PC-9 (cell line): ENCODE measurements at regions of chr17 and their contacts with region 1.

Region 1: DNA sequence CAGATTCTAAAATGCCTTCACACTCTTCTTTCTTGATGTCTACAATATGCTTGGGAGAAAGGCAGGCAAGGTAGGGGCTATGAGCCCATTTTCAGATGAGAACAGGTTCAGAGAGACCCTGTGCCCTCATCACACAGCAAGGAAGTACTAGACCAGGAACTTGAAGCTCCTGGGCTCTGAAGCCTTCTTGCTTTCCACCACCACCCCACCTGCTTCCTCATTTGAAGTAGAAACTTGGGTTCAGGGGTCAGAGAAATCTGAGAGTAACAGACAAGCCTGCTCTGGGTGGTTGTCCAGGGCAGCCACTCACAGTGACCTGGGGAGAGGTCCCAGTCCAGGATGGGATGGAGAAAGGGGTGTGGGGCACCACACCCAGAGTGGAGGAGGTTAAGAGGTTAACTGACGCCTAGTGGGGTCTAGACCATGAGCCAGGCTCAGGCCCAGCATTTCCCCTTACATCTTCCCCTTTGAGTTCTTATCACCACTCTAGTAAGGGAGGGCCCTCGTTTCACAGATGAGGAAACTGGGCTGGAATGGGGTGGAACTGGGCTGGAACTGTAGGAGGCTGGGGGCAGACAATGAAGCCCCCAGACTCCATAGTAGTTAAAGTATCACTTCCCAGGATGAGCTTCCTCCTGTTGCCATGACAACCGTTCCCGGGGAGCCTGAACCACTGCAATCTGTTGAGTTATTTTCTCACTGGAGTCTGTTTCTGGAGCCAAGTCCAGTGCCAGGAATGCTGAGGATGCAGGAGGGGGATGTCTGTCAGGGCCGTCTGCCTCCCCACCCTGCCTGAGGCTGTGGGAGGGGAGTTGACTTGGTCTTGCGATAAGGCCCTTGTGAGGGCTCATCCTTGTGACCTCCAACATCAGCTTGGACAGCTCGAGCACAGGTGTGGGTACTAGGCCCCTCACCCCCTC is 16.2 kb upstream of the PHF12 start:
- DNase-seq: no peak
- H3K4me3 ChIP-seq: no peak overlapping the region
- H3K27ac ChIP-seq: no peak overlapping the region
- H3K4me1 ChIP-seq: peaks cover 11% of the 10 kb centered on the region; the same call in 1 of the 2 replicates
- H3K27me3 ChIP-seq: no peaks in the 10 kb centered on the region
- CTCF ChIP-seq: no peak

Region 2: DNA sequence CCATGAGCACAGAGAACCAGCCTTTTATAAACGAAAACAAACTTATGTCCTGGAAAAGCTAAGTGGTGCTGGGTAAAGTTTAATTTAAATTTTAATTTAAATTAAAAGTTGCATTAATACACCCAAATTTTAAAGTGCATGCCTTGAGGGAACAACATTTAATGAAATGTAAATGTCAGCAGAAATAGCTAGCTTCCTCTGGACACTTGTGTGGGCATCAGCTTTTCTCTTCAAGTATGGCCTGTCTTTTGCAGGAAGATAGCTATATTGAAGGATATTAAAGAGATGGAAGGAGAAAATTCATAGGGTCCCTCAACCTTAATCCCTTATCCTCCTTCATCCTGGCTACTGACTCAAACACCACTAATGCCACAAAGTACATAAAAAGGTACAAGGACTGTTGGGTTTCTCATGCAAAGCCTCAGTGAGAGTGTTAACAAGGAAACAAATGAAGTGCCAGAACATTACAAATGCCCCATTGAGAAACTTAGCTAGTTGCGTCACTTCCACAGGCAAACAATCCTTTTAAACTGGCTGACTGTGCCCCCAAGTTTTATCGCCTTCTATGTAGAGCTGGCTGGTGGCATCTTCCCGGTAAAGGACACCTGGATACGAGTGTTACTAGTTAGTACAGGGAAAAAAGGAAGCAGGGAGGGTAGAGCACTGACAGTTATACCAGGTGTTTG is 30.3 kb before region 1 on chr17:
- CTCF ChIA-PET with region 1: no interaction called
- POLR2A ChIA-PET with region 1: no interaction called
- intact Hi-C with region 1: no loop called
- DNase-seq: peak in 1 of 2 experiments; percentile 89
- H3K4me3 ChIP-seq: no peak overlapping the region
- H3K27ac ChIP-seq: peak overlapping the region; percentile 58
- H3K4me1 ChIP-seq: peaks cover 29% of the 10 kb centered on the region
- H3K27me3 ChIP-seq: no peaks in the 10 kb centered on the region
- CTCF ChIP-seq: no peak

Region 3: GRCh38 chr17:29039764-29040598 is 72.5 kb after region 1 on chr17:
- CTCF ChIA-PET with region 1: interaction called, 12 read pairs
- POLR2A ChIA-PET with region 1: no interaction called
- intact Hi-C with region 1: no loop called
- DNase-seq: peak in 1 of 2 experiments; percentile 21
- H3K4me3 ChIP-seq: no peak overlapping the region
- H3K27ac ChIP-seq: no peak overlapping the region
- H3K4me1 ChIP-seq: no peaks in the 10 kb centered on the region
- H3K27me3 ChIP-seq: peaks cover 43% of the 10 kb centered on the region
- CTCF ChIP-seq: no peak

Region 4: GRCh38 chr17:29111816-29112499 is 144.5 kb after region 1 on chr17:
- CTCF ChIA-PET with region 1: interaction called, 37 read pairs
- POLR2A ChIA-PET with region 1: no interaction called
- intact Hi-C with region 1: loop called (anchors 1 kb)
- DNase-seq: peak in 1 of 2 experiments; percentile 41
- H3K4me3 ChIP-seq: no peak overlapping the region
- H3K27ac ChIP-seq: no peak overlapping the region
- H3K4me1 ChIP-seq: peaks cover 31% of the 10 kb centered on the region
- H3K27me3 ChIP-seq: no peaks in the 10 kb centered on the region
- CTCF ChIP-seq: peak; percentile 75

Region 5: GRCh38 chr17:29116804-29117772 is 149.6 kb after region 1 on chr17:
- CTCF ChIA-PET with region 1: interaction called, 37 read pairs
- POLR2A ChIA-PET with region 1: no interaction called
- intact Hi-C with region 1: loop called (anchors 1 kb)
- DNase-seq: peak; percentile 47 to 62
- H3K4me3 ChIP-seq: no peak overlapping the region
- H3K27ac ChIP-seq: no peak overlapping the region
- H3K4me1 ChIP-seq: no peaks in the 10 kb centered on the region
- H3K27me3 ChIP-seq: no peaks in the 10 kb centered on the region
- CTCF ChIP-seq: peak; percentile 97

Region 6: GRCh38 chr17:29369831-29370735 is 402.6 kb after region 1 on chr17:
- CTCF ChIA-PET with region 1: no interaction called
- POLR2A ChIA-PET with region 1: no interaction called
- intact Hi-C with region 1: loop called (anchors 5 kb)
- DNase-seq: peak; percentile 61 to 71
- H3K4me3 ChIP-seq: peak overlapping the region; percentile 10; the same call in 1 of the 2 replicates
- H3K27ac ChIP-seq: no peak overlapping the region
- H3K4me1 ChIP-seq: peaks cover 11% of the 10 kb centered on the region
- H3K27me3 ChIP-seq: no peaks in the 10 kb centered on the region
- CTCF ChIP-seq: peak; percentile 89